K562 (cell line): ENCODE measurements at regions of chr17 and their contacts with region 1.

Region 1: GRCh38 chr17:81636505-81637288 is at the starts of genes NPLOC4 and TSPAN10:
- DNase-seq: peak; percentile 91 to 98 (median 97)
- ATAC-seq: peak; percentile 91
- H3K4me3 ChIP-seq: peak within 1 kb of the TSS; percentile 69
- H3K27ac ChIP-seq: peak within 1 kb of the TSS; percentile 87
- H3K4me1 ChIP-seq: peaks cover 20 to 22% of the 10 kb centered on the region in 2 experiments; a peak in 4 of 5 replicates
- H3K27me3 ChIP-seq: no peaks in the 10 kb centered on the region
- CTCF ChIP-seq: no peak
- EP300 ChIP-seq: no peak
- POLR2A ChIP-seq: no peak
- RAD21 ChIP-seq: 0 out of 4 replicates have a peak, but pooled peaks of 1 of the 2 experiments have one; percentile 11
- polyA plus RNA-seq, gene NPLOC4: 1.5 to 2.5 TPM
- polyA plus RNA-seq, gene TSPAN10: 0.08 to 0.13 TPM

Region 2: DNA sequence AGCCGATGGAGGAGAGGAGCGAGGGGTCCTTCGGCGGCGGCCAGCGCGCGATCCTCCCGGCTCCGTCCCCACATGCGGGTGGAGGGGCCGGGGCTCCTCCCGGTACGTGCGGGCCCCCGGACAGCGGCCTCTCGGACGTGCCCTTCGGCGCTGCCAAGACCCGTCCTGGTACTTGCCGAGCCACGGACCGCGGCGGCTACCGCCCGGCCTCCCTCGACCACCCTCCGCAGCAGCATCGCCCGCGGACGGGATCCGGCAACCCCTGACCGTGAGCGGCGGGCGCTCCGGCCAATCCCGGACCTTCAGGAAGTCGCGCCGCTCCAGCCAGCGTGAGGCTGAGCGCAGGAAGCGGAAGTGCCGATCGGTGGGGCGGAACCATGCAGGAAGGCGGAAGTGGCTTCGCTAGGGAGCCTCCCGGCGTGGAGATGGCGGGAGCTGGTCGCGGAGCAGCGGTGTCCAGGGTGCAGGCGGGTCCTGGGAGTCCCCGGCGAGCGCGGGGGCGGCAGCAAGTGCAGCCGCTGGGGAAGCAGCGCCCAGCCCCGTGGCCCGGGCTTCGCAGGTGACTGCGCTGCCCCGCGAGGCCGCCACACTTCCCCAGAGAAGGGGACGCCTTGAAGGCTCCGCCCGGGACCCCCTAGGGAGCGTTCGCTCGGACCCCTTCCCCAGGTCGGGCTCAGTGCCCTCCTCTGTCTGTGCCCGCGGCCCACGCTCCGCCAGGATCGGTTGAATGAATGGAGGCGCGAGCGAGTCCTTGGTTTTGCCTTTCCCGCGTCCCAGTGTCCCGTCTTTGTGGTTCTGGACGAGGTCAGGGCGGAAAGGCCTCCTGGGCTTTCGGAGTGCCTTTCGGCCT is 29.9 kb after region 1 on chr17 and contains the starts of genes CCDC137 and OXLD1:
- CTCF ChIA-PET with region 1: no interaction called
- POLR2A ChIA-PET with region 1: interaction called, 6 read pairs
- in situ Hi-C with region 1: no loop called
- intact Hi-C with region 1: loop called (anchors 1 kb)
- DNase-seq: peak; percentile 95 to 98 (median 97)
- ATAC-seq: peak; percentile 94
- H3K4me3 ChIP-seq: peak within 1 kb of the TSS; percentile 87
- H3K27ac ChIP-seq: peak within 1 kb of the TSS; percentile 98
- H3K4me1 ChIP-seq: peaks cover 36 to 77% of the 10 kb centered on the region in 2 experiments
- H3K27me3 ChIP-seq: no peaks in the 10 kb centered on the region
- CTCF ChIP-seq: no peak
- EP300 ChIP-seq: no peak
- POLR2A ChIP-seq: peak; percentile 95
- RAD21 ChIP-seq: no peak
- polyA plus RNA-seq, gene CCDC137: 2.3 to 4.1 TPM
- polyA plus RNA-seq, gene OXLD1: 4.4 to 7.9 TPM